ENCODE measurements at regions of chr12 and their contacts with region 1.

Region 1: DNA sequence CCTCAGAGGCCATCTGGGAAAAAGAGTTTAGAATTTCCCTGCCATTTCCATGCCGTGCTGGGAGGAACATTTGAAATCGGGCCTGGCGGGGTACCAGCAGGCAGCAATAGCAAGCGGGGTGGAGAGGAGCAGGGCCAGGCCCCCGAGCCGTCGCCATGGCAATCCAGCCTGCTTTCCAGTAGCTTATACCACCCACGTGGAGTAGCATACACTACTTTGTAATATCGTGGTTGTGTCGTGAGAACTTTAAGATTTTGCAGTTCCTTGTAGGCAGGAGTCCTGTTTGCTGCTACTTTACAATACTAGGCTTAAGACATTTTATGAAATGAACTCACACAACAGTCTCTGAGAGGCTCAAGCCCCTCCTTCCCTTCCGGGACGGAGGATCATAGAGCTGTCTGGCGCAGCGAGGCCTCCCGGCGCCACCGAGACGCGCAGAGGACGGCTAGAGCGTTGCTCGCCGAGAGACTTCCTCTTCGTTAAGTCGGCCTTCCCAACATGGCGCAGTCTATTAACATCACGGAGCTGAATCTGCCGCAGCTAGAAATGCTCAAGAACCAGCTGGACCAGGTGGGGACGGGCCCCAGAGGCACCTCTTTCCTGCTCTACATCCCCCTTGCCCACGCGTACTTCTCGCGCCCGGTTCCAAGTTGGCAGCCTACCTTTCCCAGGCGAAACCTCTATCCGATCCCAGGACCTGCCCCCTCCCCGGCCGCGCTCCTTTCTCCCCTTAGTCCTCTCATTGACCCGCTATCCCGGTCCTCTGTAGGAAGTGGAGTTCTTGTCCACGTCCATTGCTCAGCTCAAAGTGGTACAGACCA is at the start of gene PFDN5:
- DNase-seq: peak; percentile 92
- H3K4me3 Mint-ChIP-seq: peak within 1 kb of the TSS; percentile 99
- H3K27ac Mint-ChIP-seq: peak within 1 kb of the TSS; percentile 94
- H3K4me1 Mint-ChIP-seq: peaks cover 53% of the 10 kb centered on the region
- H3K27me3 Mint-ChIP-seq: no peaks in the 10 kb centered on the region
- total RNA-seq, gene PFDN5: 354 to 359 TPM

Region 2: DNA sequence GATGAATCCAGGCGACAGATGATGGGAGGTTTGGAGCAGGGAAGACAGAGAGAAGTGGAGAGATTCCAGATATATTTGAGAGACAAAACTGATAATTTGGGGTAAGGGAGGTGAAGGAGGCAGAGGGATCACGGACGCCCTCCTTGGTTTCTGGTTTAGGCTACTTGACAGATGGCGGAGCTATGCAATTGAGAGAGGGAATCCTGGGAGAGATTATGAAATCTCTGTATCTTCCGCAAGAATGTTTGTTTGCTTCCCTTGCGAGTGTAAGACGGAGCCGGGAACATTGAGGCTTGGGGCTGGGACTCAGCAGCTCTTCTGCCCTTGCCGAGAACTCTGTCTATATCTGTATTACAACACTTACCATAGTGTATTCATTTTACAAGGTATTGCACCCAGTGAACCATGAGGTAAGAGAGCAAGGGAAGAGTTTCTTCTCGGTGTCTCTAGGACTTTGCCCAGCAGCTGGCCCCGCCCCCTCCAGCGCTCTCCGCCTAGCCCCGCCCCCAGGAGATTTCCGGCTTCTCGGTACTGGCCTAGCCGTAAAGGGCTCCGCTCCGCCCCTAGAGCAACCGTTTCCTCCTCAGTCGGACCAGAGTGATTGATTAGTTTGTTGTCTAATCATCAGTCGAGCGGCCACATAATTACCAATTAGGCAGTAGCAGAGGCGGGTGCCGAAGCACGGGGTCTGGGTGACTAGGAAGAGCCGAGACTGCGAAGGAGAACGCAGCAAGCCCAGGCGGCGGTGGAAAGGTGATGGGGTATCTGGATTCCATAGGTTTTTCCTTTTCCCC is 146.0 kb after region 1 on chr12 and contains the start of gene PRR13:
- CTCF ChIA-PET with region 1: no interaction called
- POLR2A ChIA-PET with region 1: no interaction called
- intact Hi-C with region 1: loop called (anchors 1 kb)
- DNase-seq: peak; percentile 100
- H3K4me3 Mint-ChIP-seq: peak within 1 kb of the TSS; percentile 97
- H3K27ac Mint-ChIP-seq: peak within 1 kb of the TSS; percentile 93
- H3K4me1 Mint-ChIP-seq: peaks cover 37% of the 10 kb centered on the region
- H3K27me3 Mint-ChIP-seq: no peaks in the 10 kb centered on the region
- total RNA-seq, gene PRR13: 218 to 221 TPM

Measured in activated CD4-positive, alpha-beta memory T cell treated with anti-CD3 and anti-CD28 coated beads for 36 hours (primary cell).